Activated CD4-positive, alpha-beta memory T cell treated with anti-CD3 and anti-CD28 coated beads for 36 hours (primary cell): ENCODE measurements at regions of chr11 and their contacts with region 1.

Region 1: DNA sequence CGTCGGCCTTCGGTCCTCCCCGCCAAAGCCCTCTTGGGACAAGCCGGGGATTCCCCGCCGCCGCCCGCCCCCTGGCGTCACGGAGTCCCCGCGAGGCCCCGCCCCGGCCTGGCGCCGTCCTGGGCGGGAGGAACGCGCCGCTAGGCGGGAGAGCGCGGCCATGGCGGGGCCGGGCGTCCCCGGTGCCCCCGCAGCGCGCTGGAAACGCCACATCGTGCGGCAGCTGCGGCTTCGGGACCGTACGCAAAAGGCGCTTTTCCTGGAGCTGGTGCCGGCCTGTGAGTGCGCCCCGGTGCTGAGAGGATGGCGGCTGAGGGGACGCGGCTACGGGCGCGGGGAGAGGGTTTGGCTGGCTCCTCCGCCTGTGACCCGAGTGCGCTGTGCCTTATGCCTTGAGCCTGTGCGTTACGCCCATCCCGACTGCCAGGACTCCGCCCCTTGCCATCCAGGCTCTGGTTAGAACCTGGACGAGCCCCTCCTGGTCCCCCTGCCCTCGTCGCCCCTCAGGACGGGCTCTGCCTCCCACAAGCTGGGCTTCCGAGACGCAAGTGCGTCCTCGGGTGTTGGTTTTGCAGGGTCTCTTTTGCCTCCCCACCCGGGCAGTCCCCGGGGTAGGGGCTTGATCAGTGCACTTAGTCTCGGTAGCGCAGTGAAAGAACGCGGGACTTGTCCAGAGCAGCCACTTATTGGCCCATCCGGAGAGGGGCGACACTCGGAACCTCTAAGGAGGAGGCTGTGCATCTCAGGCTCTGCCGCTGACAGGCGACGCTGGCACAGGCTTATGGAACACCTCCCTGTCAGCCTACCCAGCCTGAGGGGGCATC is at the start of gene ATG16L2:
- DNase-seq: peak; percentile 92
- H3K4me3 Mint-ChIP-seq: peak within 1 kb of the TSS; percentile 98
- H3K27ac Mint-ChIP-seq: peak within 1 kb of the TSS; percentile 98
- H3K4me1 Mint-ChIP-seq: peaks cover 33% of the 10 kb centered on the region
- H3K27me3 Mint-ChIP-seq: no peaks in the 10 kb centered on the region
- total RNA-seq, gene ATG16L2: 79.7 to 91.1 TPM

Region 2: GRCh38 chr11:71532036-71532610 is 1282.4 kb before region 1 on chr11:
- CTCF ChIA-PET with region 1: no interaction called
- POLR2A ChIA-PET with region 1: no interaction called
- intact Hi-C with region 1: no loop called
- DNase-seq: no peak
- H3K4me3 Mint-ChIP-seq: no peak overlapping the region
- H3K27ac Mint-ChIP-seq: no peak overlapping the region
- H3K4me1 Mint-ChIP-seq: no peaks in the 10 kb centered on the region
- H3K27me3 Mint-ChIP-seq: peaks cover 4% of the 10 kb centered on the region

Region 3: GRCh38 chr11:72683782-72684200 is 130.7 kb before region 1 on chr11:
- CTCF ChIA-PET with region 1: interaction called, 14 read pairs
- POLR2A ChIA-PET with region 1: no interaction called
- intact Hi-C with region 1: no loop called
- DNase-seq: peak; percentile 79
- H3K4me3 Mint-ChIP-seq: no peak overlapping the region
- H3K27ac Mint-ChIP-seq: no peak overlapping the region
- H3K4me1 Mint-ChIP-seq: peaks cover 17% of the 10 kb centered on the region
- H3K27me3 Mint-ChIP-seq: peaks cover 4% of the 10 kb centered on the region

Region 4: GRCh38 chr11:72752088-72752914 is 62.2 kb before region 1 on chr11 and contains the start of gene ARAP1:
- CTCF ChIA-PET with region 1: interaction called, 3 read pairs
- POLR2A ChIA-PET with region 1: no interaction called
- intact Hi-C with region 1: loop called (anchors 1 kb)
- DNase-seq: peak; percentile 85
- H3K4me3 Mint-ChIP-seq: peak within 1 kb of the TSS; percentile 94
- H3K27ac Mint-ChIP-seq: peak within 1 kb of the TSS; percentile 87
- H3K4me1 Mint-ChIP-seq: peaks cover 39% of the 10 kb centered on the region
- H3K27me3 Mint-ChIP-seq: no peaks in the 10 kb centered on the region
- total RNA-seq, gene ARAP1: 77.4 to 79.6 TPM

Region 5: DNA sequence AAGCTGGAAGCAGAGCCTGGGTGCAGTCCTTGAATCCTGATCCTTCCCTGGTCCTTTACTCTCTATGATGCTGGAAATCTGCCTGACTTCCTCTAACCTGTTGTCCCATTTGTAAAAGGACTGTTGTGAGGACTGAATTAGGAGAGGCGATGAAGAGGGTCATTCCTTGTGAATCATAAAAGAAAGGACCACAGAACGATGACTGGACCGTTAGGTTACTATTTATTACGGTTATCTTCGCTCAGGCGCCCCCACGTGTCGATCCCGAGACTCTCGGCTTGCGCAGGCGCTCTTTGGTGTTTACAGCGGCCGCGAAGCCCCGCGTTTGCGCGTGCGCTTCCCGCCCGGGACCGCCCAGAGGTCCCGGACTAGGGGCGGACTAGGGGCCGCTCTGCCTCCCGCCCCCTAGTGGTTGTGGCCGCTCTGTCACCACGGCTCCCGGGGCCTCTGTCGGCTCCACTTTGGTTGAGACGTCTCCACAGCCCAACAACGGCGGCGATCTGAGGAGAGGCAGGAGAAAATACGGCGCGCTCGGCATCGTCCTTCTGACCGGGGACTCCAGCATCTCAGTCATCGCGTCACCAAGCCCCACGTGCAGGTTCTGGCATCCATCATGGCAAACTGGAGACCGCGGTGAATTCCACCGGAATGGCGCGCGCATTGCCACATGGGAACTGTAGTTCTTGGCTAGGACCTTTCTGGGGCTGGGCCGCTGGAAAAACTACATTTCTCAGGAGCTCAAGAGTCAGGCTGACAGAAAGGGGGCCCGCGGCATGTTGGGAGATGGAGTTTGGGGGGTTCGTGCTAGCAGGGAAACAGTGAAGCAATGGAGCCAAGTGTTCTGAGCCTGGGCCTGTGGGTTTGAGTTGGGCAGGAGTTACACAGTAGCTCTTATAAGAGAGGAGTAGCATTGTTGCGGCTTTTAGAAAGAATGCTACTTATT is 20.8 kb before region 1 on chr11 and contains the start of gene STARD10:
- CTCF ChIA-PET with region 1: interaction called, 63 read pairs
- POLR2A ChIA-PET with region 1: interaction called, 19 read pairs
- intact Hi-C with region 1: loop called (anchors 1 kb)
- DNase-seq: peak; percentile 95
- H3K4me3 Mint-ChIP-seq: peak within 1 kb of the TSS; percentile 97
- H3K27ac Mint-ChIP-seq: peak within 1 kb of the TSS; percentile 100
- H3K4me1 Mint-ChIP-seq: peaks cover 24% of the 10 kb centered on the region
- H3K27me3 Mint-ChIP-seq: no peaks in the 10 kb centered on the region
- total RNA-seq, gene STARD10: 14.8 to 16.8 TPM

Region 6: DNA sequence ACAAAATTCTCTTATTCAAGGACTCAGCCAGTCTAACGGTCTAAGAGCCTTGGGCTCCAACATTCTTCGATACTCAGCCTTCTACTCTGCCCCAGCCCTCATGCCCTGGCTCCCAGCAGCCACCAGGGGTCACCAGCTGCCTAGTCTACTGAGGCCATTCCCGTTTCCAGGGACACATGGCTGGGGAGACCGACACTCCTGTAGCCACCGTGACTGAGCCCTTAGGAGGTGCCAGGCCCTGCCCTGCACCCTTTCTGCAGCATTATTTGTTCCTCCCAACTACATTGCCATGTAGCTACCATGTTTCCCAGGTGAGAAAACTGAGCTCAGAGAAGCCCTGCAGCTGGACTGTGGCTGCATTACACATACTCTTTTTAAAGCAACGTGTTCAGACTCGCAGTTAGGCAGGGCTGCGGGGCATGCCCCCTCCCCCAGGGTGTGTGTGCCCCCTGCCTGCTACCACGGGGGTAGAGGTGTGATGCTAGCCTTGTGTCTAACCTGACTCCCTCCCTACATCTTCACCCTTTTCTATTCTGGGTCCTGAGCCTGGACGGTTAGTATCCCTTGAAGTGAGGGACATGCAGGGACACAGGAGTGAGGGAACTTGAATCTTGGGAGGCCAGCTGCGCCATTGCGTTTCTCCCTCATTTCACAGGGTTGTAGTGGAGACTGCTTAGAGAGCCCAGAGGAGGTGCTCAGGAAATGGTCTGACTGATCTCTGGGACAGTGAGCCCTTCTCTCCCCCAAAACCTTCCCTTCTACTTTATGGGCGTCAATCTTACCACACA is 17.2 kb after region 1 on chr11:
- CTCF ChIA-PET with region 1: interaction called, 12 read pairs
- POLR2A ChIA-PET with region 1: interaction called, 4 read pairs
- intact Hi-C with region 1: no loop called
- DNase-seq: peak; percentile 69
- H3K4me3 Mint-ChIP-seq: no peak overlapping the region
- H3K27ac Mint-ChIP-seq: peak overlapping the region; percentile 18
- H3K4me1 Mint-ChIP-seq: peaks cover 16% of the 10 kb centered on the region
- H3K27me3 Mint-ChIP-seq: no peaks in the 10 kb centered on the region

Region 7: GRCh38 chr11:72844356-72844755 is 29.9 kb after region 1 on chr11:
- CTCF ChIA-PET with region 1: no interaction called
- POLR2A ChIA-PET with region 1: no interaction called
- intact Hi-C with region 1: no loop called
- DNase-seq: no peak
- H3K4me3 Mint-ChIP-seq: no peak overlapping the region
- H3K27ac Mint-ChIP-seq: no peak overlapping the region
- H3K4me1 Mint-ChIP-seq: peaks cover 5% of the 10 kb centered on the region
- H3K27me3 Mint-ChIP-seq: no peaks in the 10 kb centered on the region

Region 8: GRCh38 chr11:73141848-73142286 is 327.4 kb after region 1 on chr11:
- CTCF ChIA-PET with region 1: interaction called, 9 read pairs
- POLR2A ChIA-PET with region 1: no interaction called
- intact Hi-C with region 1: loop called (anchors 2 kb)
- DNase-seq: peak; percentile 65
- H3K4me3 Mint-ChIP-seq: peak overlapping the region; percentile 90
- H3K27ac Mint-ChIP-seq: peak overlapping the region; percentile 88
- H3K4me1 Mint-ChIP-seq: peaks cover 36% of the 10 kb centered on the region
- H3K27me3 Mint-ChIP-seq: no peaks in the 10 kb centered on the region